CD8-positive, alpha-beta T cell (primary cell): ENCODE measurements at regions of chr6 and their contacts with region 1.

Region 1: GRCh38 chr6:136249811-136250685 is at the start of gene MTFR2:
- DNase-seq: peak; percentile 85 to 99 (median 92)
- ATAC-seq: peak; percentile 97
- H3K4me3 ChIP-seq: peak within 1 kb of the TSS; percentile 57 to 74
- H3K4me3 Mint-ChIP-seq: peak within 1 kb of the TSS; percentile 97
- H3K27ac ChIP-seq: peak within 1 kb of the TSS in 1 of 2 experiments; percentile 17
- H3K27ac Mint-ChIP-seq: peak within 1 kb of the TSS; percentile 71
- H3K4me1 ChIP-seq: peaks cover 11% of the 10 kb centered on the region
- H3K4me1 Mint-ChIP-seq: peaks cover 36% of the 10 kb centered on the region
- H3K27me3 ChIP-seq: no peaks in the 10 kb centered on the region
- H3K27me3 Mint-ChIP-seq: no peaks in the 10 kb centered on the region
- CTCF ChIP-seq: no peak
- total RNA-seq, gene MTFR2: 1.3 to 1.5 TPM

Region 2: GRCh38 chr6:135030056-135030473 is 1220.0 kb before region 1 on chr6:
- CTCF ChIA-PET with region 1: no interaction called
- POLR2A ChIA-PET with region 1: no interaction called
- intact Hi-C with region 1: loop called in 1 of 2 experiments (anchors 10 kb)
- DNase-seq: peak in 2 of 9 experiments; percentile 39 to 61
- ATAC-seq: peak; percentile 79
- H3K4me3 ChIP-seq: no peak overlapping the region
- H3K4me3 Mint-ChIP-seq: peak overlapping the region; percentile 47
- H3K27ac ChIP-seq: peak overlapping the region in 1 of 2 experiments; percentile 9
- H3K27ac Mint-ChIP-seq: peak overlapping the region; percentile 81
- H3K4me1 ChIP-seq: peaks cover 13% of the 10 kb centered on the region
- H3K4me1 Mint-ChIP-seq: peaks cover 70% of the 10 kb centered on the region
- H3K27me3 ChIP-seq: no peaks in the 10 kb centered on the region
- H3K27me3 Mint-ChIP-seq: no peaks in the 10 kb centered on the region
- CTCF ChIP-seq: no peak

Region 3: GRCh38 chr6:135497412-135498269 is 752.4 kb before region 1 on chr6 and contains the start of gene AHI1:
- CTCF ChIA-PET with region 1: no interaction called
- POLR2A ChIA-PET with region 1: interaction called, 9 read pairs
- intact Hi-C with region 1: loop called in 1 of 2 experiments (anchors 1 kb)
- DNase-seq: peak; percentile 81 to 95 (median 86)
- ATAC-seq: peak; percentile 72
- H3K4me3 ChIP-seq: peak within 1 kb of the TSS; percentile 87 to 95
- H3K4me3 Mint-ChIP-seq: no peak within 1 kb of the TSS
- H3K27ac ChIP-seq: peak within 1 kb of the TSS; percentile 91 to 98
- H3K27ac Mint-ChIP-seq: no peak within 1 kb of the TSS
- H3K4me1 ChIP-seq: peaks cover 6% of the 10 kb centered on the region
- H3K4me1 Mint-ChIP-seq: peaks cover 8% of the 10 kb centered on the region
- H3K27me3 ChIP-seq: no peaks in the 10 kb centered on the region
- H3K27me3 Mint-ChIP-seq: no peaks in the 10 kb centered on the region
- CTCF ChIP-seq: no peak
- total RNA-seq, gene AHI1: 16.0 to 17.9 TPM

Region 4: DNA sequence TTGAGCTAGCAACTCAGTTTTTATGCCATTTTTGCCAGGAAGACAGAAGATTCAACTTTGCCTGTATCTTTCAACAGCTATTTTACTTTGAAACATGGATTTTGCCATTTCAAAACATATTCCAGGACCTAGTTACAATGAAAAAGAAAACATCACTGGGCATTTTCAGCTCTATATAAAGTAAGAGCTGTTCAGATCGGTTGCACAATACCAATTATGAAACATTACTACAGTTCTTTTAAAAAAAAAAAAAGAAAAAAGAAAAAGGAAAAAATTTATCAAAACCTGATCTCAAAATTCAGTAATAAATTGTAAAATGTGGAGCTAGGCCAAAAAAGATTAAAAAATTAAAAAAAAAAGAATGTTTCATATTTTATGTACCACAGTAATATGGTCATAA is 24.0 kb after region 1 on chr6:
- CTCF ChIA-PET with region 1: no interaction called
- POLR2A ChIA-PET with region 1: interaction called, 6 read pairs
- intact Hi-C with region 1: loop called (anchors 2 kb)
- DNase-seq: no peak
- ATAC-seq: no peak
- H3K4me3 ChIP-seq: no peak overlapping the region
- H3K4me3 Mint-ChIP-seq: no peak overlapping the region
- H3K27ac ChIP-seq: no peak overlapping the region
- H3K27ac Mint-ChIP-seq: no peak overlapping the region
- H3K4me1 ChIP-seq: peaks cover 9% of the 10 kb centered on the region
- H3K4me1 Mint-ChIP-seq: peaks cover 54% of the 10 kb centered on the region
- H3K27me3 ChIP-seq: no peaks in the 10 kb centered on the region
- H3K27me3 Mint-ChIP-seq: no peaks in the 10 kb centered on the region
- CTCF ChIP-seq: no peak

Region 5: GRCh38 chr6:136421537-136422158 is 171.6 kb after region 1 on chr6:
- CTCF ChIA-PET with region 1: no interaction called
- POLR2A ChIA-PET with region 1: no interaction called
- intact Hi-C with region 1: no loop called
- DNase-seq: no peak
- ATAC-seq: no peak
- H3K4me3 ChIP-seq: no peak overlapping the region
- H3K4me3 Mint-ChIP-seq: no peak overlapping the region
- H3K27ac ChIP-seq: no peak overlapping the region
- H3K27ac Mint-ChIP-seq: no peak overlapping the region
- H3K4me1 ChIP-seq: no peaks in the 10 kb centered on the region
- H3K4me1 Mint-ChIP-seq: no peaks in the 10 kb centered on the region
- H3K27me3 ChIP-seq: no peaks in the 10 kb centered on the region
- H3K27me3 Mint-ChIP-seq: no peaks in the 10 kb centered on the region
- CTCF ChIP-seq: no peak